Dendritic cell treated with granulocyte-macrophage colony-stimulating factor and Interleukin-4, amounts not matched to agents 40 ng/mL and 50 ng/mL, for 4 days (primary cell): ENCODE measurements at regions of chr6 and their contacts with region 1.

Region 1: DNA sequence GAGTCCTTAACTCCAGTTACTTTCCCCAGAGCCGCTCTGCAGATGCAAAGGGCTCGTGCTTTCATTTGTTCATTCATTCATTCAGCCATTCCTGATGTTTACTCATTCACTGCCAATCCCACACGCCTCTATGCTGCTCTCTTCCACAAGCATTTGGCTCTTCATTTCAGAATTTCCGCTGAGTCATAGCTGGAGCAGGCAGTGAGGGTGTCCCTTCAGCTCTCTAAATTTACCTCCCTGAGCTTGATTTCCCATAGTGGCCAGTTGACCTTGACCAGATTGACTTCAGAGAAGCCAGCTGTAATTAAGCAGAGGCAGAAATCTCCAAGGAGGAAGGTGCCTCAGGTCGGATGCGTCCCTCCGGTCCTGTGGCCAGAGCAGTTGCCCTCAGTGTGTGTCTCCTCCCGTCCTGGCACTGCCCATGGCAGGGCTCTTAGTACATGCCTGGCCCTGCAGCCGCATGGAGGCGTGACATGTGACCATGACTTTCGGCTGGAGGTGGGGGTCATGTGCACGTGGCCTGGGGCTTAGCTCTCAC is 267.1 kb upstream of the ECI2 start:
- H3K4me3 Mint-ChIP-seq: no peak overlapping the region
- H3K27ac Mint-ChIP-seq: no peak overlapping the region
- H3K4me1 Mint-ChIP-seq: peaks cover 25% of the 10 kb centered on the region
- H3K27me3 Mint-ChIP-seq: peaks cover 24% of the 10 kb centered on the region

Region 2: DNA sequence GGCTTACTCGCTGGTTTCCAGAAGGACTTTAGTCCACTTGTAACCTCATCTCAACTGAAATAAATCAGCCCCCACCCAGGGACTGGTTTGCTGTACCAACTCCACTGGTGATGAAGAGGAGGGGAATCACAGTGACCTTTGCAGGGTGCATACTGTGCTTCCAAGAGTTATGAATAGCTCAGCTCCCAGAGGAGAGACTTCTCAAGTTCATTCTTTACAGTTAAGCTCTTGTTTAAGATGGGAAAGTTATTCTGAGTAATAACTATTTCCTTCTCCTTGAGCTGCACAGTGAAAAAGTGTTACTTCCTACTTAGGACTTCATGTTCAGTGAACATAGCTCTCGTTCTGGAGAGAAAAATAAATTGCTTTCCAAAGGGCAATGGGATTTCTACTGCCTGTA is 100.6 kb before region 1 on chr6:
- intact Hi-C with region 1: loop called (anchors 10 kb)
- H3K4me3 Mint-ChIP-seq: no peak overlapping the region
- H3K27ac Mint-ChIP-seq: no peak overlapping the region
- H3K4me1 Mint-ChIP-seq: peaks cover 55% of the 10 kb centered on the region
- H3K27me3 Mint-ChIP-seq: peaks cover under 1% of the 10 kb centered on the region

Region 3: DNA sequence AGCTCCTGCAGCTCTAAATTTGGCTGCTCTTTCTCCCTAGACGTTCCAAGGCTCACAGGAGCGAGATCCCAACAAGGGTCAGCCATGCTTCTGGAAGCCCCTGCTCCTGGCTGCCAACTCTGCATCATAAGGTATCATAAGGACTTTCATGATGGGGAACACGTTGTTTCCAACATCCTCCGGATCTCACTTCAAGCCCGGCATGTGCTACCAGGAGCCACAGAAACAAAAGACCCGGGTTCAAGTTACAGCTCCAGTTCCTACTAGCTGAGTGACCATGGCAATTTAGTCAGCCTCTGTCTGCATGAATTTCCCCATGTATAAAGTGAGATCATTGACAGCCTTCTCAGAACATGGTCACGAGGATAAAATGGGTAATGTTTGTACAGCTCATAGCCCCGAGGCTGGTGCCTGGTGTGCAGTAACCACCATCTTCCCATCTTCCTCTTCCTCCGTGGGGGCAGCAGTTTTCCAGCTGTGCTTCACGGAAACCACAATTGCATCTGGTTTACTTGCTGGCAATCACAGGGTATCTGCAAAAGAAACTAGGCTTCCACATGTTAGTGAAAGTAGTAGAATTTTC is 58.1 kb before region 1 on chr6:
- intact Hi-C with region 1: no loop called
- H3K4me3 Mint-ChIP-seq: no peak overlapping the region
- H3K27ac Mint-ChIP-seq: no peak overlapping the region
- H3K4me1 Mint-ChIP-seq: peaks cover 7% of the 10 kb centered on the region
- H3K27me3 Mint-ChIP-seq: peaks cover 6% of the 10 kb centered on the region

Region 4: DNA sequence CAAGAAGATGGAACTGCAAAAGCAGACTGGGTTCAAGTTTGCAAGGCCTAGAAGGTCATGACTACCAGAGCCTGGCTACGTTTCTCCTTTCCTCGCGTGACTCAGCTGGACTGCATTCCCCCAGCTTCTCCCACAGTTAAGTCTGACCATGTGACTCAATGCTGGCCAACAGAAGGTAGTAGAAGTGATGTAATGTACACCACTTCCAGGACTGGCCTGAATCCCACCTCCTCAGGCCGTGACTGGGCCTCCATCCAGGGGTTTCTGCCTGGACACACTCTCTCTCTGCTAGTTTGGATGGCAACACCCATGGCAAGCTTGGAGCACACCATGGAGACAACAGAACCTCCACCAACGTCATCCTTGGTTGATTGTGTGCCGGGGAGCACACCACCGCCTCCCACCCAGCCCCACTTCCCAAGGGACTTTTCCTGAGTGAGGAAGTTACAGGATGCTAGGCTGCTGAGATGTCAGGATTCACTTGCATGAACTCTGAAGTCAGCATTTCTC is 261.7 kb after region 1 on chr6:
- intact Hi-C with region 1: no loop called
- H3K4me3 Mint-ChIP-seq: no peak overlapping the region
- H3K27ac Mint-ChIP-seq: no peak overlapping the region
- H3K4me1 Mint-ChIP-seq: peaks cover 5% of the 10 kb centered on the region
- H3K27me3 Mint-ChIP-seq: peaks cover 5% of the 10 kb centered on the region